ENCODE measurements at regions of chr12 and their contacts with region 1.

Region 1: GRCh38 chr12:90455756-90456155 is 499.2 kb downstream of the CCER1 start:
- DNase-seq: no peak
- ATAC-seq: no peak

Region 2: GRCh38 chr12:90407841-90408240 is 47.9 kb before region 1 on chr12:
- intact Hi-C with region 1: loop called (anchors 1 kb)
- DNase-seq: no peak
- ATAC-seq: no peak